Naive thymus-derived CD4-positive, alpha-beta T cell (primary cell): ENCODE measurements at regions of chr4 and their contacts with region 1.

Region 1: GRCh38 chr4:18021722-18022571 is at the start of gene LCORL:
- DNase-seq: peak; percentile 66 to 87 (median 84)
- ATAC-seq: peak; percentile 88
- H3K4me3 ChIP-seq: peak within 1 kb of the TSS; percentile 94
- H3K4me3 Mint-ChIP-seq: peak within 1 kb of the TSS; percentile 91 to 98 (median 94)
- H3K27ac ChIP-seq: peak within 1 kb of the TSS; percentile 75
- H3K27ac Mint-ChIP-seq: peak within 1 kb of the TSS; percentile 80 to 92 (median 89)
- H3K4me1 ChIP-seq: peaks cover 0 to 9% of the 10 kb centered on the region in 2 donors
- H3K4me1 Mint-ChIP-seq: peaks cover 13 to 28% (median 18%) of the 10 kb centered on the region in 7 donors
- H3K27me3 ChIP-seq: no peaks in the 10 kb centered on the region
- H3K27me3 Mint-ChIP-seq: peaks cover 0 to 75% (median 6%) of the 10 kb centered on the region in 5 donors
- total RNA-seq, gene LCORL: 7.7 to 15.2 (median 13.1) TPM

Region 2: DNA sequence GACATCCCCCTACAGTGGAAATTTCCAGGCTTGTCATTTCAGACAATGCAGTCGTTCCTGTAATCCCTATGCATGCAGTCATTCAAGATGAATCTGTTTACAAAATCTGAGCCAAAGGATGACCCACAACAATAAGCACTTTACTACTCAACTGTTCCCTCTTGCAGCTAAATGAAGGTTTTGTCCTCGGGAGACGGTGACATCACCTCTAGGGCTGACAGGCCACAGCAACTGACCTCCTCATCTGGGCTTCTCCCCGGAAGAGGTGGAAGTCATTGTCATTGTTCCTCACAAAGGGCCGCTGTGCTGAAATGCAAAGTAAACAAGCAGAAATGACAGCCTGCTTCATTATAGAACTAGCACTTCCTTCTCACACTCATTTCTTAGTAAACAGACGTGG is 477.7 kb before region 1 on chr4:
- CTCF ChIA-PET with region 1: no interaction called
- POLR2A ChIA-PET with region 1: no interaction called
- intact Hi-C with region 1: loop called in 1 of 2 experiments (anchors 1 kb)
- DNase-seq: no peak
- ATAC-seq: peak; percentile 38
- H3K4me3 ChIP-seq: no peak overlapping the region
- H3K4me3 Mint-ChIP-seq: no peak overlapping the region
- H3K27ac ChIP-seq: no peak overlapping the region
- H3K27ac Mint-ChIP-seq: no peak overlapping the region
- H3K4me1 ChIP-seq: no peaks in the 10 kb centered on the region
- H3K4me1 Mint-ChIP-seq: peaks cover 0 to 6% (median 0%) of the 10 kb centered on the region in 7 donors
- H3K27me3 ChIP-seq: no peaks in the 10 kb centered on the region
- H3K27me3 Mint-ChIP-seq: peaks cover 0 to 22% (median 16%) of the 10 kb centered on the region in 5 donors

Region 3: GRCh38 chr4:17614416-17615299 is 407.3 kb before region 1 on chr4 and contains the start of gene MED28:
- CTCF ChIA-PET with region 1: no interaction called
- POLR2A ChIA-PET with region 1: interaction called, 3 read pairs
- intact Hi-C with region 1: loop called (anchors 1 kb)
- DNase-seq: peak; percentile 91 to 96 (median 94)
- ATAC-seq: peak; percentile 97
- H3K4me3 ChIP-seq: peak within 1 kb of the TSS; percentile 100
- H3K4me3 Mint-ChIP-seq: peak within 1 kb of the TSS; percentile 86 to 100 (median 96)
- H3K27ac ChIP-seq: peak within 1 kb of the TSS; percentile 94
- H3K27ac Mint-ChIP-seq: peak within 1 kb of the TSS; percentile 92 to 99 (median 97)
- H3K4me1 ChIP-seq: peaks cover 19 to 31% of the 10 kb centered on the region in 2 donors
- H3K4me1 Mint-ChIP-seq: peaks cover 23 to 58% (median 45%) of the 10 kb centered on the region in 7 donors
- H3K27me3 ChIP-seq: no peaks in the 10 kb centered on the region
- H3K27me3 Mint-ChIP-seq: no peaks in the 10 kb centered on the region
- total RNA-seq, gene MED28: 50.1 to 82.1 (median 55.7) TPM

Region 4: DNA sequence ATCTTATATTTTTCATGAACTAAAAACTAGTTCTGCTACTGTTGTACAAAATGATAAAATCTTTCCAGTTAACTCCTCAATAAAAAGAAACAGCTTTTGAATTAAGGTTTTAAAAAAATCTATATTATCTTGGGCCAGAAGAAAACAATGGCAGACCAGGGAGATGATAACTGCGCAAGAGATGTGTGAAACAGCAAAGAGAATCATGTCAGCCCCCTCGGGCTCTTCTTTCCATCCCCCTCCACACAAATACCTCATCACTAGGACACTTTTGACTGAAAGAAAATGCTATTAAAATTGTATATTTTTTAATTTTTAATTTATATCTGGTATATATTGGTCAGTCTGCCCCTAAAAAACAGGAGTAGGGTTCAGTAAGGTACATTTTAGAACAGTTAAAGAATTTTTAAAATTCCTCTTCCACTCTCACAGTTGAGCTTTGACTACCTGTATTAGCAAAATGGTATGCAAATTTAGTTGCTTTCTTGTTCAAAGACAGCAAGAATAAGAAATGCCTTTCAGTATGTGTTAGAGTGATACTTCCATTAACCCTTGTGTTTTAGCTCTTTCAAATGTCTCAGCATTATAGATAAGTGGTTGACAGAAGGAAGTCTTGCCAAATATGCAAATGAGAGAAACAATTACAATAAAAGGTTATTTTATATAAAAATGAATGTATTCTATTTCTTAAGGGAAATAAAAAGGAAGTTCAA is 36.0 kb after region 1 on chr4:
- CTCF ChIA-PET with region 1: no interaction called
- POLR2A ChIA-PET with region 1: no interaction called
- intact Hi-C with region 1: loop called (anchors 1 kb)
- DNase-seq: no peak
- ATAC-seq: no peak
- H3K4me3 ChIP-seq: no peak overlapping the region
- H3K4me3 Mint-ChIP-seq: peak overlapping the region in 7 of 10 donors; percentile 4 to 56 (median 29)
- H3K27ac ChIP-seq: no peak overlapping the region
- H3K27ac Mint-ChIP-seq: peak overlapping the region in 1 of 9 donors; percentile 33
- H3K4me1 ChIP-seq: peaks cover 4 to 7% of the 10 kb centered on the region in 2 donors
- H3K4me1 Mint-ChIP-seq: peaks cover 8 to 27% (median 21%) of the 10 kb centered on the region in 7 donors
- H3K27me3 ChIP-seq: peaks cover 4 to 5% of the 10 kb centered on the region in 2 donors
- H3K27me3 Mint-ChIP-seq: peaks cover 39 to 61% (median 52%) of the 10 kb centered on the region in 5 donors

Region 5: GRCh38 chr4:18366892-18367291 is 344.9 kb after region 1 on chr4:
- CTCF ChIA-PET with region 1: no interaction called
- POLR2A ChIA-PET with region 1: no interaction called
- intact Hi-C with region 1: loop called in 1 of 2 experiments (anchors 5 kb)
- DNase-seq: peak in 4 of 9 donors; percentile 0 to 14 (median 10)
- ATAC-seq: peak; percentile 67
- H3K4me3 ChIP-seq: no peak overlapping the region
- H3K4me3 Mint-ChIP-seq: no peak overlapping the region
- H3K27ac ChIP-seq: no peak overlapping the region
- H3K27ac Mint-ChIP-seq: no peak overlapping the region
- H3K4me1 ChIP-seq: no peaks in the 10 kb centered on the region
- H3K4me1 Mint-ChIP-seq: no peaks in the 10 kb centered on the region
- H3K27me3 ChIP-seq: no peaks in the 10 kb centered on the region
- H3K27me3 Mint-ChIP-seq: peaks cover 0 to 32% (median 13%) of the 10 kb centered on the region in 5 donors